Naive thymus-derived CD4-positive, alpha-beta T cell (primary cell): ENCODE measurements at regions of chr12 and their contacts with region 1.

Region 1: DNA sequence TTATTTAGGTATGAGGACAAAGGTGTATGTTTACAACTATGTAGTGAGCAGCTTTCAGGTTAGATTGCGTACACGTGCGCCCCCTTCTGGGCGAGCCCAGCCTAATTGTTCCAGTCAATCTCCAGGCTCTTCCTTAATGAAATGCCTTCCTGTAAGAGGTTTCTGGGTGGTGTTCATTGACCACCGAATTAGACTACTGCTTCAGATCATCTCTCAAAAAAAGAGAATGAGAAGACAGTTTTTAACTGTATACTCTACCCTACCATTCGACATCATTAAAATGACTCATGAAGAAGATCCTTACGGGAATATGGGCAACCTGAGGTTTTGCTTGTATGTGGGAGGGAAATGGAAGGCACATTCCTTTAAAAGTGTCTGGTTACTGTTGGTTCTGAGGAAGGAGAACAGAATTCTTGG is 2.1 kb downstream of the LUM start:
- DNase-seq: peak in 3 of 9 donors; percentile 4 to 53 (median 7)
- ATAC-seq: peak; percentile 46
- H3K4me3 ChIP-seq: no peak overlapping the region
- H3K4me3 Mint-ChIP-seq: no peak overlapping the region
- H3K27ac ChIP-seq: no peak overlapping the region
- H3K27ac Mint-ChIP-seq: no peak overlapping the region
- H3K4me1 ChIP-seq: no peaks in the 10 kb centered on the region
- H3K4me1 Mint-ChIP-seq: peaks cover 0 to 2% (median 0%) of the 10 kb centered on the region in 7 donors
- H3K27me3 ChIP-seq: no peaks in the 10 kb centered on the region
- H3K27me3 Mint-ChIP-seq: peaks cover 0 to 15% (median 9%) of the 10 kb centered on the region in 5 donors

Region 2: DNA sequence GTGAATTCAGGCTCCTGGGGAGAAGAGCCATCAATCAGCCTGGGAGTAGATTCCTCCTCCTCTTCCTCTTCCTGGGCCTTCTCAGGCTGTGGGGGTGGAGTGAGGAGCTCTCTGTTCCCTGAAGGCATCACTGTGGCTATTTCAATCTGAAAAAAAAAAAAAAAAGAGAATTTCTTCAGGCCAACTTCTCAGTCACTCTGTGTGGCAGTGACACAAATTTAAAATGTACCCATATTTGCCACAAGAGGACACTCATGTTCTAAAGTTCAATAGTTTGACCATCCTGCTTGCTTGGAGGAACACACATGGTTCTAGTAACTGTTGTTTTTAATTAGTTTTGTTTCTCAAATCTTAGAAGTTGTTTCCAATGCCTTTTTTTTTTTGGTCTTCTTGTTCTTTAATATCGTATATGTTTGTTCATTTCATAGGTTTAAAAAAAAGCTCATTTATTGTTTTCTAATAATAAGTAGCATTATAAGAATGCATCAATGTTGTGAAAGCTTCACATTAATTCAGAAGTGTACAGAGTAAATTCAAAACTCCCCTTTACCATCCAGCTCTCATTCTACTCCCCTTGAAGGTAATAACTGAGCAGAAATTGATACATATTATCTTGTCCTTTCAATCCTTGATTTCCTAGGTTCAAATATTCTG is 130.9 kb before region 1 on chr12:
- CTCF ChIA-PET with region 1: no interaction called
- POLR2A ChIA-PET with region 1: no interaction called
- intact Hi-C with region 1: loop called in 1 of 2 experiments (anchors 1 kb)
- DNase-seq: peak in 1 of 9 donors; percentile 7
- ATAC-seq: peak; percentile 59
- H3K4me3 ChIP-seq: no peak overlapping the region
- H3K4me3 Mint-ChIP-seq: no peak overlapping the region
- H3K27ac ChIP-seq: no peak overlapping the region
- H3K27ac Mint-ChIP-seq: no peak overlapping the region
- H3K4me1 ChIP-seq: no peaks in the 10 kb centered on the region
- H3K4me1 Mint-ChIP-seq: no peaks in the 10 kb centered on the region
- H3K27me3 ChIP-seq: no peaks in the 10 kb centered on the region
- H3K27me3 Mint-ChIP-seq: peaks cover 0 to 19% (median 0%) of the 10 kb centered on the region in 5 donors

Region 3: GRCh38 chr12:91222746-91223145 is 113.6 kb after region 1 on chr12:
- CTCF ChIA-PET with region 1: no interaction called
- POLR2A ChIA-PET with region 1: no interaction called
- intact Hi-C with region 1: no loop called
- DNase-seq: no peak
- ATAC-seq: no peak
- H3K4me3 ChIP-seq: no peak overlapping the region
- H3K4me3 Mint-ChIP-seq: no peak overlapping the region
- H3K27ac ChIP-seq: no peak overlapping the region
- H3K27ac Mint-ChIP-seq: no peak overlapping the region
- H3K4me1 ChIP-seq: no peaks in the 10 kb centered on the region
- H3K4me1 Mint-ChIP-seq: no peaks in the 10 kb centered on the region
- H3K27me3 ChIP-seq: no peaks in the 10 kb centered on the region
- H3K27me3 Mint-ChIP-seq: peaks cover 0 to 19% (median 11%) of the 10 kb centered on the region in 5 donors

Region 4: GRCh38 chr12:91274916-91275315 is 165.8 kb after region 1 on chr12:
- CTCF ChIA-PET with region 1: no interaction called
- POLR2A ChIA-PET with region 1: no interaction called
- intact Hi-C with region 1: no loop called
- DNase-seq: no peak
- ATAC-seq: no peak
- H3K4me3 ChIP-seq: no peak overlapping the region
- H3K4me3 Mint-ChIP-seq: no peak overlapping the region
- H3K27ac ChIP-seq: no peak overlapping the region
- H3K27ac Mint-ChIP-seq: no peak overlapping the region
- H3K4me1 ChIP-seq: no peaks in the 10 kb centered on the region
- H3K4me1 Mint-ChIP-seq: no peaks in the 10 kb centered on the region
- H3K27me3 ChIP-seq: peaks cover 0 to 3% of the 10 kb centered on the region in 2 donors
- H3K27me3 Mint-ChIP-seq: peaks cover 0 to 44% (median 29%) of the 10 kb centered on the region in 5 donors